Caco-2 (cell line): ENCODE measurements at regions of chr22 and their contacts with region 1.

Region 1: GRCh38 chr22:30606455-30607299 is at the start of gene TCN2:
- DNase-seq: peak; percentile 78 to 82
- H3K4me3 ChIP-seq: peak within 1 kb of the TSS; percentile 57
- H3K4me3 Mint-ChIP-seq: peak within 1 kb of the TSS; percentile 88
- H3K27ac Mint-ChIP-seq: peak within 1 kb of the TSS; percentile 58
- H3K4me1 ChIP-seq: peaks cover 16% of the 10 kb centered on the region
- H3K4me1 Mint-ChIP-seq: peaks cover 17% of the 10 kb centered on the region
- H3K27me3 ChIP-seq: no peaks in the 10 kb centered on the region
- H3K27me3 Mint-ChIP-seq: no peaks in the 10 kb centered on the region
- CTCF ChIP-seq: no peak
- total RNA-seq, gene TCN2: 11.9 and 13.8 TPM in 2 replicates

Region 2: DNA sequence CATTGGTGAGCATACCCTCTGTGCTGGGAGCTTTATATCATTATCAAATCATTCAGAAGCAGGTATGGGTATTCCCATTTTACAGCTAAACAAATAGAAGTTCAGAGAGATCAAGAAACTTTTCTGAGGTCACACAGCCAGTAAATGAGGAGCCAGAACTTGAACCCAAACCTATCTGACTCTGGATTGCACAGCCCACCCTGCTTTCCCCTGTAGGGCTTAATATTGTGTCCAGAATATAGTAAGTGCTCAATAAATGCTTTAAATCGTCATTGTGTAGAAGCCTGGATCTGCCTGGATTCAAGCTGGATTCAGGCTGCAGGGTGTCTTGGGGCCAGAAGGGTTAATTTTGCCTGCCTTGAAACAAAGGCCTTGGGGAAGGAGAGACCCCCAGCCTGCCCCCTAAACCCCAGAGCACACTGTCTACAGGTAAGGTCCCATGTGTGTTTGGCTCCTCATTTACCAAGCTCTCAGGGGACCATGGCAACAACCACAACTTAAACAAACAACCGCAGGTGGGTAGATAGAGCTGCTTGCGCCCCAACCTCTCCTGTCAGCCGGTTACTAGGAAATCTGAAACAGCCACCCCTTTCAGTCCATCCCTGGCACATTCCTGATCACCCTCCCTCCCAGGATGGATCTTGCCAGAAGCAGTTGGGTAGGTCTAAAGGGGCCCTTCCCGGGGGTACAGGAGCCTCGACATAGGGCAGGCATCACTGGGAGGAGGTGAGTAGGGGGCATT is 131.8 kb before region 1 on chr22:
- CTCF ChIA-PET with region 1: no interaction called
- POLR2A ChIA-PET with region 1: no interaction called
- intact Hi-C with region 1: no loop called
- DNase-seq: peak in 1 of 2 experiments; percentile 10
- H3K4me3 ChIP-seq: no peak overlapping the region
- H3K4me3 Mint-ChIP-seq: no peak overlapping the region
- H3K27ac Mint-ChIP-seq: no peak overlapping the region
- H3K4me1 ChIP-seq: no peaks in the 10 kb centered on the region
- H3K4me1 Mint-ChIP-seq: no peaks in the 10 kb centered on the region
- H3K27me3 ChIP-seq: no peaks in the 10 kb centered on the region
- H3K27me3 Mint-ChIP-seq: peaks cover 8% of the 10 kb centered on the region
- CTCF ChIP-seq: no peak

Region 3: DNA sequence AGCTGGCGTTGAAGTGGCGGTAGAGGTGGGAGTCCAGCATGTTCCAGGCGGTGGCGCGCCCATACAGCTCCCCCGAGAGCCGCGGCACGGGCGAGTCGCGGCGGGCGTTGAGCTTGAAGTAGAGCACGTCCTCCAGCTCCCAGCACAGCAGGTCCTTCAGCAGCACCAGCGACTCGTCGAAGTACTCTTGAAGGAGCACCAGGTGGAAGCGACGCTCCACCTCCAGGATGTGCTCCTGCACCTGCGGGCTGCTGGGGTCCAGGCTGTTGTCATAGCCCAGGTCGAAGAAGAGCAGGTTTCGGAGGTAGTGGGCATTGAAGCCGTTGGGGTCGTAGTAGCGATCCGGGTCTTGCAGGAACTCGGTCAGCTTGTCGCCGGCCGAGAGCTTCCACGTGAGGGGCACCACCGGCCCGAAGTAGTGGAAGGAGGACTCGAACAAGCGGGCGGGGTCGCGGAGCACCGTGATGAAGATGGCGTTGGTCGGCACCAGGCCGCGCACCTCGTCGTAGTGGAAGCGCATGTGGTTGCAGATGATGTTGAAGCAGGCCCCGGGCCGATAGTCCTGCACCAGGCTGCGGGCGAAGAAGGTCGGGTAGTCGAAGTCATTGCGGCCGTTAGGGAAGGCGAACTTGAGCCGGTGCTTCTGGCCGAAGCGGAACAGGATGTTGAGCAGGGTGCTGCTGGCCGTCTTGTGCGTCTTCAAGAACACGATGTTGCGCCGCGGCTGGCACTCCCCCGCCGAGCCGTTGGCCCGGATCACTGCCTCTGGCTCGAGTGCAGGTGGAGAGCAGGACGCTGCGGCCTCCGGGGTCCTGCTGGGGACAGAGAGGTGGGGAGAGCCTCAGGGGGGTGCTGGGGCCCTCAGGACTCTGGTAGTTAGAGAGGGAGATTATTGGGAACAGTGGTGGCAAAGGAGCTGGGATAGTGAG is 51.1 kb before region 1 on chr22:
- CTCF ChIA-PET with region 1: interaction called, 4 read pairs
- POLR2A ChIA-PET with region 1: no interaction called
- intact Hi-C with region 1: loop called (anchors 1 kb)
- DNase-seq: peak in 1 of 2 experiments; percentile 28
- H3K4me3 ChIP-seq: no peak overlapping the region
- H3K4me3 Mint-ChIP-seq: no peak overlapping the region
- H3K27ac Mint-ChIP-seq: no peak overlapping the region
- H3K4me1 ChIP-seq: no peaks in the 10 kb centered on the region
- H3K4me1 Mint-ChIP-seq: no peaks in the 10 kb centered on the region
- H3K27me3 ChIP-seq: no peaks in the 10 kb centered on the region
- H3K27me3 Mint-ChIP-seq: no peaks in the 10 kb centered on the region
- CTCF ChIP-seq: peak; percentile 15 to 18

Region 4: GRCh38 chr22:30586414-30586813 is 20.3 kb before region 1 on chr22:
- CTCF ChIA-PET with region 1: interaction called, 11 read pairs
- POLR2A ChIA-PET with region 1: interaction called, 14 read pairs
- intact Hi-C with region 1: no loop called
- DNase-seq: no peak
- H3K4me3 ChIP-seq: no peak overlapping the region
- H3K4me3 Mint-ChIP-seq: no peak overlapping the region
- H3K27ac Mint-ChIP-seq: no peak overlapping the region
- H3K4me1 ChIP-seq: peaks cover 8% of the 10 kb centered on the region
- H3K4me1 Mint-ChIP-seq: no peaks in the 10 kb centered on the region
- H3K27me3 ChIP-seq: no peaks in the 10 kb centered on the region
- H3K27me3 Mint-ChIP-seq: no peaks in the 10 kb centered on the region
- CTCF ChIP-seq: no peak

Region 5: DNA sequence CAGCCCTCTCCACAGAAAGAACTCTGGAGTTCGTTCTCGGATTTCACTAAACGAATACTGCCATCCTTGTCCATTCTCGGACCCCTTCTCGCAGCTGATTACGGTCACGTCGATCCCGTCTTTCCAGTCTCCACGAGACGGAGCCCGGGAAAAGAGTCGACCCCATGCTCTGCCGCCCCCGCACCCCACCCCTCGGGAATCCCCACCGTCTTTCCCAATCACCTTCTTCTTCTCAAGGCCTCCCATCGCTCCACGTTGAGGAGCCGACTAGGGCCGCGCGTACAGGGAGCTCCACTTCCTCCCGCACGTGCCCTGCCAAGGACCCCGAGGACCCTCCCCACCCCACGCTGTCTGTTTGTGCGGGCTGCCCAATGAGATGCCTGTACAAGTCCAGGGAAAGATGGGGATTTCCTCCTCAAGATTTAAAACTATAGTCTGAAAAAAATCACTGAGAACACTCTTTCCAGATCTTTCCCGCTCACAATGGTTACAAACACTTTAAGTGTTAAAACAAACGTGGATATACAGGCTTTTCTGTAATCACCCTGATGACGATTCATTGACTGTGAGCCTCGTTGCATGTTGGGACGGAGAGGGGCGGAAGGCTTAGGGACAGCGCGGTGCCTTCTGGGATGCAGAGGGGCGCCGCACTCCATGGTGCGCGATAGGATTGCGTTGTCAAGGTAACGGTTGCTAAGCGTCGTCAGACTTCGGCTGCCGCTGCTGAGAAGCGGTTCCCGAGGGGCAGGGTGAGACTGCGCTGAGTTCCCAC is 14.9 kb before region 1 on chr22 and contains the start of gene PES1:
- CTCF ChIA-PET with region 1: interaction called, 11 read pairs
- POLR2A ChIA-PET with region 1: interaction called, 14 read pairs
- intact Hi-C with region 1: no loop called
- DNase-seq: peak; percentile 95 to 97
- H3K4me3 ChIP-seq: peak within 1 kb of the TSS; percentile 77
- H3K4me3 Mint-ChIP-seq: no peak within 1 kb of the TSS
- H3K27ac Mint-ChIP-seq: no peak within 1 kb of the TSS
- H3K4me1 ChIP-seq: peaks cover 8% of the 10 kb centered on the region
- H3K4me1 Mint-ChIP-seq: no peaks in the 10 kb centered on the region
- H3K27me3 ChIP-seq: no peaks in the 10 kb centered on the region
- H3K27me3 Mint-ChIP-seq: peaks cover 4% of the 10 kb centered on the region
- CTCF ChIP-seq: no peak
- total RNA-seq, gene PES1: 110 and 117 TPM in 2 replicates

Region 6: GRCh38 chr22:30634471-30635233 is 28.0 kb after region 1 on chr22:
- CTCF ChIA-PET with region 1: interaction called, 17 read pairs
- POLR2A ChIA-PET with region 1: no interaction called
- intact Hi-C with region 1: no loop called
- DNase-seq: peak; percentile 83 to 89
- H3K4me3 ChIP-seq: no peak overlapping the region; the same call in 1 of the 2 replicates
- H3K4me3 Mint-ChIP-seq: peak overlapping the region; percentile 66
- H3K27ac Mint-ChIP-seq: no peak overlapping the region
- H3K4me1 ChIP-seq: peaks cover 13% of the 10 kb centered on the region
- H3K4me1 Mint-ChIP-seq: no peaks in the 10 kb centered on the region
- H3K27me3 ChIP-seq: no peaks in the 10 kb centered on the region
- H3K27me3 Mint-ChIP-seq: no peaks in the 10 kb centered on the region
- CTCF ChIP-seq: peak; percentile 92 to 94

Region 7: DNA sequence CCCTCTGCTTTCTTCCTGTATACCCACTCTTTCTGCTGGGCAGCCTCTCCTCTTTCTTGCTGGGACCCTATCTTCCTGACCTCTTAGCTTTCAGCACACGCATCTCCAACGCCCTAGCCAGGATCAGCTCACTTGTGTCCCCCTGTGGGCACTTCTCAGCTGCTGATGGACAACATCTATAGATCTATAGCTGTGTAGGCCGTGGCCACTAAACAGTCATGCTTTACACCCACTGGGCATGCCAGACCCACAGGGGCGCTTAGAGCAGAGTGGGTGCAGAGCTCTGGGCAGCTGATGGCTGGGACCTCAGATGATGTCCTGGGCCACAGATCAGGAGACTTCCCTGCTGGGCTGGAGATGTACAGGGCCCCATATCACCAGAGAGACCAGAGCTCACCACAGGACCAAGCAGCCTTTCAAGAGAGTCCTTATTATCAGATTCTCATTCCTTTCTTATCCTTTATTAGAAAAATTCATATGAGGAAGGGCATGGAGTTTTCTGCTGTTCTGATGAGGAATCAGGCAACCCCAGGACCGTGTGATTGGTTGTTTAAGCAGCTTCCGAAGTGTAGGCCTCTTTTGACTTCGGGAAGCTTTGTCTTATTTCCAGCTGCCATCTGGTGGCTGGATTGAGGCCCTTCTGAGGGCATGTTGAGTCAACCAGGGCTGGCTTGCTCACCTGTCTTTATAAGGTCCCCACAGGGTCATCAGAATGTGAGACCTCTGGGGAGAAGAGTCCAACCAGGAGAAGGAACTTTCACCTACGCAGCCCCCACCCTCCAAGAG is 148.5 kb after region 1 on chr22:
- CTCF ChIA-PET with region 1: interaction called, 10 read pairs
- POLR2A ChIA-PET with region 1: no interaction called
- intact Hi-C with region 1: no loop called
- DNase-seq: peak; percentile 69 to 71
- H3K4me3 ChIP-seq: no peak overlapping the region
- H3K4me3 Mint-ChIP-seq: no peak overlapping the region
- H3K27ac Mint-ChIP-seq: no peak overlapping the region
- H3K4me1 ChIP-seq: no peaks in the 10 kb centered on the region
- H3K4me1 Mint-ChIP-seq: peaks cover 6% of the 10 kb centered on the region
- H3K27me3 ChIP-seq: no peaks in the 10 kb centered on the region
- H3K27me3 Mint-ChIP-seq: peaks cover 8% of the 10 kb centered on the region
- CTCF ChIP-seq: peak; percentile 22 to 83

Region 8: DNA sequence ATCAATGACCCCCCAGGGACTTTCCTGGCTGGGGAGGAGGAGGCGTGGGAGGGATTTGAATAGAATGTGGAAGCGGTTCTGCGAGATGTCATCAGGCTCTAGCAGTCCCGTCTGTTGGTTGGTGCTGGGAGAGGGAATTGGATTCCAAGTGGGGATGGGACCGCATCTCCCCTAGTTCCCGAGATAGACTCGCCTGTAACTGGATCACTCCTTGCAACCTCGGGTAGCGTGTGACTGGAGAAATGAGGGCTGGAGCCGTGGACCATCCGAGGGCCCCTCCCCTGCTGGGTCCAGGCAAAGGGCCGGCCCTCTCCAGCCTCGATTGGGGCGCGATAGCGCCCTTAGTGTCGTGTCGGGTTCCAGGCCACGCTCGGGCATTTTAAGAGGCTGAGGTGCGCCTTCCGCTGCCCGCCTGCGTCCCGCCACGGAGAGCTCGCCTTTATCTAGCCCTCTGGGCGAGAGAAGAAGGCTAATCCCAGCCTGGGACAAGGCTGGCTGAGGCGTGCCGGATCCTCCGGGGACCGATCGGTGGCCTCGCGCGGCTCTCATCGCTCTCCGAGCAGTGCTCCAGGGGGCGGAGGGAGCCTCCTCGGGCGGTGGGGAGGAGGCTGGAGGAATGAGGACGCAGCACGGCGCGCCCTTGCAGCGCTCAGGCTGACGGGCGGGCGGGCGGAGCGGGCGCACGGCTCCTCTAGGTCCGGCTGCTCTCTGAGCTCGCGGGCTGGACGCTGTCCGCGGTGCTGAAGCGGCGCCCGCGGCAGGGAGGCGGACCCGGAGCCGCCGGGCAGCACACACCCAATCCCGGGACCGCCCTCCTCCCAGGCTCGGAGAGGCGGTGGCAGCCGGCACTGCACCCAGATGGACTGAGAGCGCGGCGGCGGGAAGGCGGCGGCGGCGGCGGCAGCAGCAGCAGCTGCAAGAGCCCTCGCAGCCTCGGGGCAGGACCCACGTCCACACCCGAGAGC is 195.8 kb after region 1 on chr22:
- CTCF ChIA-PET with region 1: no interaction called
- POLR2A ChIA-PET with region 1: interaction called, 17 read pairs
- intact Hi-C with region 1: no loop called
- DNase-seq: peak; percentile 87 to 96
- H3K4me3 ChIP-seq: peak overlapping the region; percentile 30
- H3K4me3 Mint-ChIP-seq: peak overlapping the region; percentile 25
- H3K27ac Mint-ChIP-seq: no peak overlapping the region
- H3K4me1 ChIP-seq: peaks cover 6% of the 10 kb centered on the region; the same call in 1 of the 2 replicates
- H3K4me1 Mint-ChIP-seq: no peaks in the 10 kb centered on the region
- H3K27me3 ChIP-seq: no peaks in the 10 kb centered on the region
- H3K27me3 Mint-ChIP-seq: peaks cover 29% of the 10 kb centered on the region
- CTCF ChIP-seq: peak in 1 of 2 experiments; percentile 31